ENCODE measurements at regions of chrX and their contacts with region 1.

Region 1: GRCh38 chrX:24828147-24828546 is 134.4 kb downstream of the POLA1 start:
- DNase-seq: no peak
- ATAC-seq: no peak
- H3K4me3 ChIP-seq: no peak overlapping the region
- H3K27ac ChIP-seq: no peak overlapping the region
- H3K4me1 ChIP-seq: no peaks in the 10 kb centered on the region
- H3K27me3 ChIP-seq: no peaks in the 10 kb centered on the region

Region 2: GRCh38 chrX:24777660-24778059 is 50.5 kb before region 1 on chrX:
- intact Hi-C with region 1: no loop called
- DNase-seq: no peak
- ATAC-seq: no peak
- H3K4me3 ChIP-seq: no peak overlapping the region
- H3K27ac ChIP-seq: no peak overlapping the region
- H3K4me1 ChIP-seq: no peaks in the 10 kb centered on the region
- H3K27me3 ChIP-seq: no peaks in the 10 kb centered on the region

Region 3: GRCh38 chrX:24879679-24880078 is 51.5 kb after region 1 on chrX:
- intact Hi-C with region 1: loop called in 1 of 2 experiments (anchors 10 kb)
- DNase-seq: no peak
- ATAC-seq: no peak
- H3K4me3 ChIP-seq: no peak overlapping the region
- H3K27ac ChIP-seq: no peak overlapping the region
- H3K4me1 ChIP-seq: no peaks in the 10 kb centered on the region
- H3K27me3 ChIP-seq: no peaks in the 10 kb centered on the region

Region 4: DNA sequence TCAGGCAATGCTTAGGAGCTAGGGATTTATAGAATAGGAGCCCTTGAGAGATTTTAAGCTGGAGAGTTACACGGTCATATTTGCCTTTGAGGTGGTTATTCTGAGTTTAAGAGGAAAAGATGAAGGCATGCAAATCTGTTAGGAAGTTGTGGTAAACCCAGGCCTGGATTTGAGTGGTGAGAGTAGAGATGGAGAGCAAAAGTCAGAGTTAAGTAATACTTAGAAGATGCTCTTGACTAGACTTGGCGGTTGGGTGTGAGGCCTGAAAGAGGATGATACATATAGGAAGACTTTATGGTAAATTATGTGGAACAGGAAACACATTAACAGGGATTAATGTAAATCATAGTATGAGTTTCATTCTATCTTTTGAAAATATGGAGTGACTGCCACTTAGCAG is 323.6 kb after region 1 on chrX:
- intact Hi-C with region 1: loop called in 1 of 2 experiments (anchors 2 kb)
- DNase-seq: no peak
- ATAC-seq: no peak
- H3K4me3 ChIP-seq: no peak overlapping the region
- H3K27ac ChIP-seq: no peak overlapping the region
- H3K4me1 ChIP-seq: no peaks in the 10 kb centered on the region
- H3K27me3 ChIP-seq: no peaks in the 10 kb centered on the region

Measured in aorta (tissue), 5 donors.